Tibial artery (tissue), 4 donors: ENCODE measurements at regions of chr10 and their contacts with region 1.

Region 1: DNA sequence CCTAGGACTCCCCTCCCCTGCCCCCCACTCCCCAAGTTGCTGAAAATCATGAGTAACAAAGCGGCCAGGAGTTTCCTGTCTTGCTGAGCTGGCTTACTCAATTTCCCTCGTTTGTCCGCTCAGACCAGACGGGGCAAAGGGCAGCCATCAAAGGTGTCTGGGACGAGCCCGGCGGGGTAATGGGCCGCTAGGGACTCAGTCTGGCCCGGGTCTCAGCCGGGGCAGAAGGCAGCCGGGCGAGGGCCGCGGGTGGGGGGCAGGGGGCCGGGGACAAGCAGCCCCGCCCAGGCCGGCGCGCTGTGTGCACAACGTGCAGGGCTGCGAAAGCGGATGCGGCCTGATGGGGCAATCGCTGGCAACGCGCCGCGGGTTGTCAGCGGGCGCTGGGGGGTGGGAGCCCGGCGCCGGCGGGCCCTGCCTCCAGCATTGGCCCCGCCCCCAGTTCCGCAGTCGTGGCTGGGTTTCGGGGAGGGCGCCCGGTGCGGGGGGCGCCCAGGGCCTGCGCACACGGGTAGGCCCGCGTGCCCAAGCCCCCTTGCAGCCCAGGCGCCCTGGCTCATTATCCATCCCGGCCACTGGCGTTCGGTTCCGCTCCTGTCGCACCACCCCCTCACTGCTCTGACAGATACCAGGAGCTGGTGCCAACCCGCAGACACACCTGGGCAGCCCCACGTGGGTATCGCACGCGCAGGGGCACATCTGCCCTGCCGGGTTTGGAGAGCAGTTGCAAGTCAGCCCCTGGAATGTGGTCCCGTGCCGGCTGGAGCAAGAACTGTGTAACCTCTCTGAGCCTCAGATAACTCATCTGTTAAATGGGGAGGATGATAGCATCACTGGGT is 35.1 kb downstream of the DNAJB12 start:
- DNase-seq: peak; percentile 93 to 97
- H3K4me3 ChIP-seq: peak overlapping the region; percentile 46 to 47
- H3K27ac ChIP-seq: peak overlapping the region; percentile 84 to 85
- H3K4me1 ChIP-seq: peaks cover 0 to 70% (median 53%) of the 10 kb centered on the region in 4 donors
- H3K27me3 ChIP-seq: no peaks in the 10 kb centered on the region
- CTCF ChIP-seq: peak in 1 of 2 experiments; percentile 10

Region 2: DNA sequence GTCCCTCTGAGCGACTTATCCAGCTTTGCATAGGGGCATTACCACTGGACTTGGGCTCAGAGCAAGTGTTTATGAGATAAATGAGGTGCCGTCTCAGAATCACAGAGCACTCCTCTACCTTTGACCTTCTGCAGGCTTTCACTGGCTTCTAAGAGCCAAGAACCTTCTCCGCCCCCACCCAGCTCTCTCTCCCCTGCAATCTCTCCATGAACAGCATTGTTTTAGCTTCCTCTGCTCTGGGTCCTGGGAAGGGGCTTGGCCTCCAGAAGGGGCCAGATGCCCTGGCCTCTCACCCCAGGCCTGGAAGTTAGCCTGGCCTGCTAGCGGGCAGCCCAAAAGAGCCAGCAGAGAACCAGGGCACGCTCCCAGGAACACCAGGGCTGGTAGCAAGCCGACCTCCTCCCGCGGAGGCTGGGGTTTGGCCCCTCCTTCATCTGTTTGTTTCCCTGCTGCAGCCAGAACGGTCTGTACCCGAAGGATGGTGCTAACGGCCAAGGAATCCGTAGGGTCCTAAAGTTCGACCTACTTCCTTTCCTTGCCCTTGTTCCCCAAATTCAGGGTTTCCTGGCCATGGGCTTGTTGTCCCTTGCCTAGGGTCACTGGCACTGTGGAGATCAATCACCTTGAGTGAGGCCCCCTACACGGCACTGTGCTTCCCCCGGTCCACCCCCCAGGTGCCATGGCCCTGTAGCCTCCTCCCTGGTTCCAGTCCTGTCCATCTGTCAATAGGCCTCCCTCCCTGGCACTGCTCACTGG is 64.6 kb before region 1 on chr10:
- intact Hi-C with region 1: loop called (anchors 5 kb)
- DNase-seq: peak; percentile 96 to 98
- H3K4me3 ChIP-seq: no peak overlapping the region
- H3K27ac ChIP-seq: peak overlapping the region; percentile 85 to 91
- H3K4me1 ChIP-seq: peaks cover 12 to 98% (median 75%) of the 10 kb centered on the region in 4 donors
- H3K27me3 ChIP-seq: no peaks in the 10 kb centered on the region
- CTCF ChIP-seq: no peak